ENCODE measurements at regions of chr1 and their contacts with region 1.

Region 1: GRCh38 chr1:200139661-200140250 is 112.2 kb downstream of the NR5A2 start:
- DNase-seq: no peak
- ATAC-seq: peak; percentile 67 to 80 (median 70)
- H3K4me3 ChIP-seq: no peak overlapping the region
- H3K27ac ChIP-seq: no peak overlapping the region
- H3K4me1 ChIP-seq: no peaks in the 10 kb centered on the region
- H3K27me3 ChIP-seq: no peaks in the 10 kb centered on the region
- CTCF ChIP-seq: peak; percentile 49

Region 2: GRCh38 chr1:200090252-200091096 is 49.3 kb before region 1 on chr1:
- intact Hi-C with region 1: no loop called
- DNase-seq: no peak
- ATAC-seq: no peak
- H3K4me3 ChIP-seq: no peak overlapping the region
- H3K27ac ChIP-seq: no peak overlapping the region
- H3K4me1 ChIP-seq: no peaks in the 10 kb centered on the region
- H3K27me3 ChIP-seq: no peaks in the 10 kb centered on the region
- CTCF ChIP-seq: no peak

Region 3: GRCh38 chr1:200274116-200274515 is 134.4 kb after region 1 on chr1:
- intact Hi-C with region 1: loop called in 1 of 2 experiments (anchors 5 kb)
- DNase-seq: no peak
- ATAC-seq: no peak
- H3K4me3 ChIP-seq: no peak overlapping the region
- H3K27ac ChIP-seq: no peak overlapping the region
- H3K4me1 ChIP-seq: no peaks in the 10 kb centered on the region
- H3K27me3 ChIP-seq: no peaks in the 10 kb centered on the region
- CTCF ChIP-seq: no peak

Region 4: DNA sequence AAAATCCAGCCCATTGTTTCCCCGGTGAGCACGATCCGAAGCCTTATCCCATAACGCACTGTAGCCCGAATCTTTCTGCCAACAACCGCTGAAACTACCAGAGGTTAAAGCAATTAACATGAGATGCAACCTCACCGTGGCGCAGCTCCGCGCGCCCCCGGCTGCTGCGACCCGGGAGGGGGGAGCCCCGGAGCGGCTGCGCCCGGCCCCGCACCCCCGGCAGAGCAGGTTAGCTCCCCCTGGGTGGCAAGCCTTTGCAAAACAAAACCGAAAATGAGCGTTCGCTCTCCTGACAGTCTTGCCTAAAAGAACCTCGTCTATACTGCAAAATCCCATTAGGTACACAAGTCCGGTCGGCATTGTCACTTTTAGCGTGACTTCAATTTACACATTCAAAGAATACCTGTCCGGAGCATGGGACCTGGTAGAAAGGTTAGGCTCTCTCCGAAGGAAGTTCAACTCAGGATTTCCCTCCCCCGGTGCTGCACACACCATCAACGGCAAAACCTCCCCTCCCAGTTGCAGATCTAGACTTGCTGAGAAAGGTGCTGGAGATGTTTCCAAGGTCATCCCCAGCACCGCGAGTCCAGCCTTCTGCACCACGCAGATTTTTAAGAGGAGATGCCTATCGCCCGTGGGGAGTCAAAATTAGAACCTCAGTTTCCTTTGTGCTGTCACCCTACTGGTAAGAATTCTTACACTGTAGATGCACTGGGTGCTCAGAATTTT is 162.6 kb after region 1 on chr1:
- intact Hi-C with region 1: loop called in 1 of 2 experiments (anchors 10 kb)
- DNase-seq: no peak
- ATAC-seq: peak in 3 of 4 donors; percentile 8 to 41 (median 26)
- H3K4me3 ChIP-seq: peak overlapping the region; percentile 75
- H3K27ac ChIP-seq: no peak overlapping the region
- H3K4me1 ChIP-seq: no peaks in the 10 kb centered on the region
- H3K27me3 ChIP-seq: peaks cover 0 to 18% (median 2%) of the 10 kb centered on the region in 3 donors
- CTCF ChIP-seq: no peak

Measured in psoas muscle (tissue), 8 donors.